ENCODE measurements at regions of chr15 and their contacts with region 1.

Region 1: GRCh38 chr15:66401130-66402021 is 14.7 kb downstream of the MAP2K1 start:
- DNase-seq: no peak
- H3K4me3 ChIP-seq: no peak overlapping the region
- H3K27ac ChIP-seq: no peak overlapping the region
- H3K4me1 ChIP-seq: peaks cover 1 to 18% (median 14%) of the 10 kb centered on the region in 4 experiments; a peak in 6 of 7 replicates
- H3K27me3 ChIP-seq: no peaks in the 10 kb centered on the region
- CTCF ChIP-seq: peak; percentile 17 to 57 (median 30); a peak in 2 of 4 replicates
- EP300 ChIP-seq: no peak
- POLR2A ChIP-seq: no peak
- RAD21 ChIP-seq: peak; percentile 44 to 47; a peak in 3 of 4 replicates

Region 2: DNA sequence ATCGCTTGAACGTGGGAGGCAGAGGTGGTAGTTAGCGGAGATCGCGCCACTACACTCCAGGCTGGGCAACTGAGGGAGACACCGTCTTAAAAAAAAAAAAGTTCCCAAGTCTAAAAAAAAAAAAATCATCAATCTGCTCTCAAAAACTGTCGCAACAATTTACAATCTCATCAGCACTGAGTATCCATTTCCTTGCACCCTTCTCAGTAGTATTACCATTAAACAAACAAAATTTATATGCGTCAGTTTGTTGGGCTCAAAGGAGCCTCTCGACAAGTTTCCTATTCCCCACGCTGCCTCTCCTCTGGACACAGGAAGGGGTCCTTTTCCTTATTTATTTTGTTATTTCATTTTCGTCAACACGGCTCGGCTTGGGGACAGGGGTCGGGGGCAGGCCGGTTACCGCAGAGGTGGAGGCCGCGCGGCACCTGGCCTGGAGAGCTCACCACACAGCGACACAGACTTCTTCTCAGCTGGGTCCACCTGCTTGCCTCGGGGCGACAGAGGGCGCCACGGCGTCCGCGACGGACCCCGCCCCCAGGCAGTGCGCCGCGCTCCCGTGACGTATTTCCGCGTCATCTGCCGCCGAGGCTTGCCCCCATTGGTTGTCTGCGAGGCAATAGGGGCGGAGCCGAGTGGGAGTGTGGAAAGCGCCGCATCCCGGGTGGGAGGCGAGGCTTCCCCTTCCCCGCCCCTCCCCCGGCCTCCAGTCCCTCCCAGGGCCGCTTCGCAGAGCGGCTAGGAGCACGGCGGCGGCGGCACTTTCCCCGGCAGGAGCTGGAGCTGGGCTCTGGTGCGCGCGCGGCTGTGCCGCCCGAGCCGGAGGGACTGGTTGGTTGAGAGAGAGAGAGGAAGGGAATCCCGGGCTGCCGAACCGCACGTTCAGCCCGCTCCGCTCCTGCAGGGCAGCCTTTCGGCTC is 14.9 kb before region 1 on chr15 and contains the start of gene MAP2K1:
- CTCF ChIA-PET with region 1: interaction called, 47 read pairs
- POLR2A ChIA-PET with region 1: interaction called, 11 read pairs
- DNase-seq: peak; percentile 85 to 98
- H3K4me3 ChIP-seq: peak within 1 kb of the TSS; percentile 51 to 96 (median 88)
- H3K27ac ChIP-seq: 0 out of 2 replicates have a peak within 1 kb of the TSS, but pooled peaks have one; percentile 6
- H3K4me1 ChIP-seq: peaks cover 0 to 3% (median 0%) of the 10 kb centered on the region in 4 experiments; a peak in 2 of 7 replicates
- H3K27me3 ChIP-seq: no peaks in the 10 kb centered on the region
- CTCF ChIP-seq: peak; percentile 54 to 77 (median 71)
- EP300 ChIP-seq: no peak
- POLR2A ChIP-seq: peak in 1 of 2 experiments; percentile 54; a peak in 1 of 3 replicates
- RAD21 ChIP-seq: peak; percentile 29 to 41
- total RNA-seq, gene MAP2K1: 70.4 and 78.2 TPM in 2 replicates

Region 3: DNA sequence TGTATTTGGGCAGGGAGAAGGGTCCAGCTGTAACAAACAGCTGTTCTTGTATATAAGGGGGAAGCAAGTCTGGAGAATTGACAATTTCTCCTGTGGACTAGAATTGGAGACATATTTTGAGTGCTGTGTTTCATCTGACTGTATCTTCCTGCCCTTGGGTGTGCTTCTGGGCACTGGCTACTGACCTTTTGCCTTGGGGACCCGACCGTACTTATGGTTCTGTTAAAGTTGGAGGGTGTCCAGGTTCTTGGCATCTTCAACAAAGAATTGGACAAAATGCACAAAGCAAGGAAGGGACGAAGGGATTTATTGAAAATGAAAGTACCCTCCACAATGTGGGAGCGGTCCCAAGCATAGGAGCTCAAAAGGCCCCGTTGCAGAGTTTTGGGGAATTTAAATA is 16.4 kb after region 1 on chr15:
- CTCF ChIA-PET with region 1: interaction called, 18 read pairs
- POLR2A ChIA-PET with region 1: interaction called, 20 read pairs
- DNase-seq: no peak
- H3K4me3 ChIP-seq: no peak overlapping the region
- H3K27ac ChIP-seq: no peak overlapping the region
- H3K4me1 ChIP-seq: peaks cover 2 to 13% (median 8%) of the 10 kb centered on the region in 4 experiments; a peak in 4 of 7 replicates
- H3K27me3 ChIP-seq: no peaks in the 10 kb centered on the region
- CTCF ChIP-seq: no peak
- EP300 ChIP-seq: no peak
- POLR2A ChIP-seq: no peak
- RAD21 ChIP-seq: no peak

Region 4: GRCh38 chr15:66433726-66434125 is 32.4 kb after region 1 on chr15:
- CTCF ChIA-PET with region 1: interaction called, 22 read pairs
- POLR2A ChIA-PET with region 1: no interaction called
- DNase-seq: no peak
- H3K4me3 ChIP-seq: no peak overlapping the region
- H3K27ac ChIP-seq: no peak overlapping the region; the same call in 1 of the 2 replicates
- H3K4me1 ChIP-seq: peaks cover 0 to 14% (median 0%) of the 10 kb centered on the region in 4 experiments; a peak in 1 of 7 replicates
- H3K27me3 ChIP-seq: no peaks in the 10 kb centered on the region
- CTCF ChIP-seq: no peak
- EP300 ChIP-seq: no peak
- POLR2A ChIP-seq: no peak
- RAD21 ChIP-seq: no peak

Region 5: DNA sequence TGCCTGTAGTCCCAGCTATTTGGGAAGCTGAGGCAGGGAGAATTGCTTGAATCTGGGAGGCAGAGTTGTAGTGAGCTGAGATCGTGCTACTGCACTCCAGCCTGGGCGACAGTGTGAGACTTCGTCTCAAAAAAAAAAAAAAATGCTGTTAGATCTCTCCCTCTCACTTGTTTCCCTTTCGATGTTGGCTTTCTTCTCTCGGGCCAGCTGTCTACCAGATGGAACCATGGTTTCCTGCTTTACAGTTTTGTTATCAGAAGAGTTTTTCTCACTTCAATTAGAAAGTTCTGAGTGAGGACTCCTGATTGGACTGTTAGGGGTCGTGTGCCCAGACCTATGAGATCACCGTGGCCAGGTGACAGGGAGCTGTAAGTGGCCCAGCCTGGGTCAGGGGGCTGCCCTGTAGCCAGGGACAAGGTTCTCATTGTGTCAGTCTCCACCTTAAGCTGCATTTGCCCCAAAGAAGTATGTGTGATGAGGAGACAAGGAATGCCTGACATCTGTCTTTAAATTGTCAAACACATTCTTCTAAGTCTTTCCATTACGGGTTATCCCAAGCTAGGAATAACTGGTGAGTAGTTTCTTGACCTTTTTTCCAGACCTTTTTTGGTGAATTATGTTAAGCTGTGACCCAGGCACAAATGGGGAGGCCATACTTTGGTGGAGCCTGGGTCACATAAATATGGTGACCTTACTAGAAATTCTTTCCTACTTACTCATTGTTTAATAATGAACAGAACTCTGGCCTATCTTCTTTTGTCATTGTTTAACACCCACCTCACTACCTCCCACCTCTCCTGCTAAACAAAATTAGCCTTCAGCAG is 71.0 kb after region 1 on chr15:
- CTCF ChIA-PET with region 1: interaction called, 11 read pairs
- POLR2A ChIA-PET with region 1: interaction called, 4 read pairs
- DNase-seq: no peak
- H3K4me3 ChIP-seq: peak overlapping the region in 1 of 4 experiments; percentile 0; a peak in 1 of 8 replicates
- H3K27ac ChIP-seq: peak overlapping the region; percentile 62; the same call in 1 of the 2 replicates
- H3K4me1 ChIP-seq: peaks cover 23 to 57% (median 44%) of the 10 kb centered on the region in 4 experiments
- H3K27me3 ChIP-seq: no peaks in the 10 kb centered on the region
- CTCF ChIP-seq: no peak
- EP300 ChIP-seq: no peak
- POLR2A ChIP-seq: no peak
- RAD21 ChIP-seq: no peak

Region 6: GRCh38 chr15:66685638-66686150 is 284.3 kb after region 1 on chr15:
- CTCF ChIA-PET with region 1: no interaction called
- POLR2A ChIA-PET with region 1: no interaction called
- DNase-seq: no peak
- H3K4me3 ChIP-seq: no peak overlapping the region
- H3K27ac ChIP-seq: no peak overlapping the region
- H3K4me1 ChIP-seq: no peaks in the 10 kb centered on the region
- H3K27me3 ChIP-seq: no peaks in the 10 kb centered on the region
- CTCF ChIP-seq: peak in 1 of 3 experiments; percentile 22; a peak in 1 of 4 replicates
- EP300 ChIP-seq: no peak
- POLR2A ChIP-seq: no peak
- RAD21 ChIP-seq: peak in 1 of 2 experiments; percentile 11; a peak in 1 of 4 replicates